ENCODE measurements at regions of chr14 and their contacts with region 1.

Region 1: DNA sequence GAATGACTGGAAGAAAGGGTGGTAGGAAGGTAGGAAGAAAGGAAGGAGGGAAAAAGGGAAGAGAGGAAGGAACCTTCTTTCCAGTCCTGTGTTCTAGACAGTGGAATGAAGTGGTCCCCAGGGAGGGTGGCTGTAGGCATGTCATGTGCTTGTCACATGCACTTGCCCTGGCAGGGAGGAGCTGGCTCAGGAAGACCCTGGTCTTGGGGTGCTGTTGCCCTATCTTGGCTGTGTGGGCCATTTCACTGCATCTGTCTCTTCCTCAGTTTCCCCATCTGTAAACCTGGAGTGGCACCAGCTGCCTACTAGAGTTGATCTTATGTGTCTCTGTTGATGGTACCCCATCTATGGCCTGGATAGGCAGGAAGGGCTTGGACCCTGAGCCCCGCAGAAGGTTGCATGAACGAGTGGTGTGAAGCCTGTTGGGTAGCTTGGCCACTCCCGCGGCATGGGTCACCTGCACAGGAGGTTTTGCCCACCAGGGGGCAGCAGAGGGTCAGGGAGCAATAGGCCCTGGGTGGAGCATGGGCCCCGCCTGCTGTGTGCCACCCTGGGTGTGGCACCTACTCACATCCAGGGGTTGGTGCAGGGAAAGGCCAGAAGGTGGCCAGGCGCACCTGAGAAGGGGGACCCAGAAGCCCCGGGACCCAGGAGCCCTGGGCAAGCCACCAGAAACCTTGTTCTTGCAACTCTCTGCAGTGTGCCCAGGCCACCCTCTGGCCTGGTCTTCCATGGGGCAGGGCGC is 25.1 kb downstream of the MEG3 start:
- DNase-seq: peak; percentile 87
- H3K4me3 Mint-ChIP-seq: no peak overlapping the region
- H3K27ac Mint-ChIP-seq: no peak overlapping the region
- H3K4me1 Mint-ChIP-seq: peaks cover 2% of the 10 kb centered on the region
- H3K27me3 Mint-ChIP-seq: no peaks in the 10 kb centered on the region

Region 2: GRCh38 chr14:100317912-100318808 is 532.9 kb before region 1 on chr14:
- CTCF ChIA-PET with region 1: no interaction called
- intact Hi-C with region 1: no loop called
- DNase-seq: peak; percentile 71
- H3K4me3 Mint-ChIP-seq: peak overlapping the region; percentile 58
- H3K27ac Mint-ChIP-seq: no peak overlapping the region
- H3K4me1 Mint-ChIP-seq: peaks cover 3% of the 10 kb centered on the region
- H3K27me3 Mint-ChIP-seq: no peaks in the 10 kb centered on the region

Region 3: DNA sequence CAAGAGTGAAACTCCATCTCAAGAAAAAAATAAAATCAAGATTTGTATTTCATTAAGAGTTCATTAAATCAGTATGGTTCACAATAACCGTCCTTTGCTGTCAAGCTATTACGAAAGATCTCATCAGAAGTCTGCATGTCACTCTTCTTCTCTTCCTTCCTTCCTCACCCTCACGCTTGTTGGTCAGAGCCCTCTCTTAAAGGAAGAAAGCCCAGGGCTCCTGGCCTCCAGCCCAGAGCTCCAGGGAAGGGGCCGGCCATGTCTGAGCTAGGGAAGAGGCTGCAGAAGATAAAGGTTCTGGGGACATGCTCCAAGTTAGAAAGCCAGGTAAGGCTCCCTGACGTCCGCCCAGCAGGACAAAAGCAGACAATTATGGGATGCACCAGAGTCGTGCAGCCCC is 167.4 kb before region 1 on chr14:
- CTCF ChIA-PET with region 1: no interaction called
- intact Hi-C with region 1: no loop called
- DNase-seq: no peak
- H3K4me3 Mint-ChIP-seq: no peak overlapping the region
- H3K27ac Mint-ChIP-seq: no peak overlapping the region
- H3K4me1 Mint-ChIP-seq: no peaks in the 10 kb centered on the region
- H3K27me3 Mint-ChIP-seq: no peaks in the 10 kb centered on the region

Region 4: DNA sequence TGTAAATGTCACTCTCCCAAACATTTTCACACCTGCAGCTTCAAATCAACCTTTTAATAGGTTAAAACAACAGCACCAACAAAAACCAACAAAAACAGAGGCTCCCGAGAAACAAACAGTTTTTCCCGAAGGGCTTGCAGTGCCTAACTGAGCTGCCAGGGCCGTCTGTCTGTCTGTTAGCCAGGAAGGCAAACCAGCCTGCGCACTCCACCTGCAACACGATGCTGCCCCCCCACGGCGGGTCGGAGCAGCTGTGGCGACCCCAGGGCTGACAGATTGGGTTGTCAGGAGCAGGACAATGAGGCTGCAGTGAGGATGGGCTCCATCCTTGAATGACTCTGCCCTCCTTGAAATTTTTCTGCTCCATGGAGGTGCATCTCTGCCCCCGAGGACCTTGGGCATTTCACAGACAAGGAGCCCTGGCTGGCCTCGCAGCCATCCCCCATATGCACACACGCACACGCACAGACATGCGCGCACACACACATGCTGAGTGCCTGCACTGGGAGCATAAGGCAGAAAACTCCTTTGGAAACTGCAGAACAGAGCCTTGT is 49.9 kb after region 1 on chr14:
- CTCF ChIA-PET with region 1: no interaction called
- intact Hi-C with region 1: loop called (anchors 2 kb)
- DNase-seq: peak; percentile 45
- H3K4me3 Mint-ChIP-seq: no peak overlapping the region
- H3K27ac Mint-ChIP-seq: no peak overlapping the region
- H3K4me1 Mint-ChIP-seq: no peaks in the 10 kb centered on the region
- H3K27me3 Mint-ChIP-seq: peaks cover 57% of the 10 kb centered on the region

Region 5: DNA sequence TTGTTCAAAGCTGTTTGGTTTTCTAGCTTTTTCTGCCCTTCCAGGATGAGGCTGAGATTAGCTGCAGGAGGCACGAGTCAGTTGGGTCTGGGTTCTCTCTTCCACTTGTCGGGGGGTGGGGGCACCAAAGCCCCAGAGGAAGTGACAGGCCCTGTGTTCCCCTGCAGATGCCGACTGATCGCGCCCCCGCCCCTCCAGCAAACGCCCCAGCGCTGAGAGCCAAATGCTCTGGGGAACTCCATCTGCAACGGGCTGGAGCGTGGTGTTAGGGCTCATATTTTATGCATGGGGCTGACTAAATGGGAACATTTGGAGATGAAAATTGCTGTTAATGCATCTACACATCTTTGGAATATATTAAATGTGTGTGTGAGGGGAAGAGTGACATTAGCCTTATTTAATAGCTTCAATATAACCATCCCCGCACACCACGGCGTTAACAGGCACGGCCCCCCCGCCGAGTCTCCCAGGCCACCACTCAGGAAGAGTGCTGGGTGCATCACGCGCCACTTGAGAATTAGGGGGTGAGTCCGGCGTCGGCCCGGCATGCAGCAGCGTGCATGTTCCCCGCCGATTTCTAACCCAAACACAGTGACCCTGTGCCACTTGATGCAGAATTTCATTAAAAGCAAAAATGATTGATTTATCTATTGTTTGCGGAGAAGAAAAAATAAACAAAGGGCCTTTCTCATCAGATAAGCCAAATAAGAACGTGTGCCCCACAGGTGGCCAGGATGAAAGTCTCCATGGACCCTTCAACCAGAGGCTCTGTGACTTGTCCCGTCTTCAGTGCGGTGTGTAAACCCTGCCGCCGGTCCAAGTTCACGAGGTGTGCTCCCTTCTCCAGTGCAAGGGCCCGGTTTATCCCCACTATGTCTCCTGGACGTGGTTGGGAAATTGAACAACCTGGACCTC is 217.6 kb after region 1 on chr14:
- CTCF ChIA-PET with region 1: no interaction called
- intact Hi-C with region 1: no loop called
- DNase-seq: no peak
- H3K4me3 Mint-ChIP-seq: no peak overlapping the region
- H3K27ac Mint-ChIP-seq: no peak overlapping the region
- H3K4me1 Mint-ChIP-seq: no peaks in the 10 kb centered on the region
- H3K27me3 Mint-ChIP-seq: peaks cover 5% of the 10 kb centered on the region

Region 6: GRCh38 chr14:101235335-101236103 is 384.5 kb after region 1 on chr14:
- CTCF ChIA-PET with region 1: interaction called, 3 read pairs
- intact Hi-C with region 1: loop called (anchors 5 kb)
- DNase-seq: peak; percentile 52
- H3K4me3 Mint-ChIP-seq: no peak overlapping the region
- H3K27ac Mint-ChIP-seq: no peak overlapping the region
- H3K4me1 Mint-ChIP-seq: no peaks in the 10 kb centered on the region
- H3K27me3 Mint-ChIP-seq: no peaks in the 10 kb centered on the region

Region 7: GRCh38 chr14:101575582-101575981 is 724.6 kb after region 1 on chr14:
- CTCF ChIA-PET with region 1: no interaction called
- intact Hi-C with region 1: no loop called
- DNase-seq: no peak
- H3K4me3 Mint-ChIP-seq: no peak overlapping the region
- H3K27ac Mint-ChIP-seq: no peak overlapping the region
- H3K4me1 Mint-ChIP-seq: no peaks in the 10 kb centered on the region
- H3K27me3 Mint-ChIP-seq: no peaks in the 10 kb centered on the region

Region 8: GRCh38 chr14:101628471-101628966 is 777.5 kb after region 1 on chr14:
- CTCF ChIA-PET with region 1: no interaction called
- intact Hi-C with region 1: loop called (anchors 1 kb)
- DNase-seq: peak; percentile 75
- H3K4me3 Mint-ChIP-seq: no peak overlapping the region
- H3K27ac Mint-ChIP-seq: no peak overlapping the region
- H3K4me1 Mint-ChIP-seq: no peaks in the 10 kb centered on the region
- H3K27me3 Mint-ChIP-seq: no peaks in the 10 kb centered on the region

Measured in activated naive CD4-positive, alpha-beta T cell treated with anti-CD3 and anti-CD28 coated beads for 36 hours (primary cell).